ENCODE measurements at regions of chr17 and their contacts with region 1.

Region 1: DNA sequence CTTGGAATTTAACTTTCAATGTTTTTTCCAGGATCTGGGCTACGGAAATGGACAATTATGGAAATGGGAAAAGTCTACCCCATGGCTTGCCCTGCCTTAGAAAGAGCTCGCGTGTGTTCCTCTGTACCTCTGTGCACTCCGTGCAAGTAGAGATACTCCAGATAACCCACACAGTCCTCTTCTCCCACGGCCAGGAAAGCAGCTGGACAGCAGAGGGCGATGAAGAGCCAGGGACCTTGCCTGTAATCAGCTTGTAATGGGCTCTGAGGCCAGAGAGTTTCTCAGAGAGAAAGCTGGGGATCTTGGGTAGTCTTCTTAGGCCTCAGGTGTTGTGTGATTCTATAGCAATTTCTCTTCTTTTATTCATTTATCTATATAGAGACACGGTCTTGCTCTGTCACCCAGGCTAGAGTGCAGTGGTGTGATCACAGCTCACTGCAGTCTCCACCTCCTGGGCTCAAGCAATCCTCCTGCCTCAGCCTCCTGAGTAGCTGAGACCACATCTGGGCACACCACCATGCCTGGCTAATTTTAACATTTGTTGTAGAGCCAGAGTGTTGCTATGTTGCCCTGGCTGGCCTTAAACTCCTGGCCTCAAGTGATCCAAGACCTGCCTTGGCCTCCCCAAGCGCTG is 2.4 kb upstream of the SOCS7 start:
- DNase-seq: peak; percentile 89 to 91
- H3K4me3 ChIP-seq: no peak overlapping the region
- H3K27ac ChIP-seq: no peak overlapping the region
- H3K4me1 ChIP-seq: peaks cover 12 to 17% of the 10 kb centered on the region in 2 donors
- H3K27me3 ChIP-seq: no peaks in the 10 kb centered on the region
- CTCF ChIP-seq: peak; percentile 49 to 95 (median 91)
- POLR2A ChIP-seq: no peak

Region 2: DNA sequence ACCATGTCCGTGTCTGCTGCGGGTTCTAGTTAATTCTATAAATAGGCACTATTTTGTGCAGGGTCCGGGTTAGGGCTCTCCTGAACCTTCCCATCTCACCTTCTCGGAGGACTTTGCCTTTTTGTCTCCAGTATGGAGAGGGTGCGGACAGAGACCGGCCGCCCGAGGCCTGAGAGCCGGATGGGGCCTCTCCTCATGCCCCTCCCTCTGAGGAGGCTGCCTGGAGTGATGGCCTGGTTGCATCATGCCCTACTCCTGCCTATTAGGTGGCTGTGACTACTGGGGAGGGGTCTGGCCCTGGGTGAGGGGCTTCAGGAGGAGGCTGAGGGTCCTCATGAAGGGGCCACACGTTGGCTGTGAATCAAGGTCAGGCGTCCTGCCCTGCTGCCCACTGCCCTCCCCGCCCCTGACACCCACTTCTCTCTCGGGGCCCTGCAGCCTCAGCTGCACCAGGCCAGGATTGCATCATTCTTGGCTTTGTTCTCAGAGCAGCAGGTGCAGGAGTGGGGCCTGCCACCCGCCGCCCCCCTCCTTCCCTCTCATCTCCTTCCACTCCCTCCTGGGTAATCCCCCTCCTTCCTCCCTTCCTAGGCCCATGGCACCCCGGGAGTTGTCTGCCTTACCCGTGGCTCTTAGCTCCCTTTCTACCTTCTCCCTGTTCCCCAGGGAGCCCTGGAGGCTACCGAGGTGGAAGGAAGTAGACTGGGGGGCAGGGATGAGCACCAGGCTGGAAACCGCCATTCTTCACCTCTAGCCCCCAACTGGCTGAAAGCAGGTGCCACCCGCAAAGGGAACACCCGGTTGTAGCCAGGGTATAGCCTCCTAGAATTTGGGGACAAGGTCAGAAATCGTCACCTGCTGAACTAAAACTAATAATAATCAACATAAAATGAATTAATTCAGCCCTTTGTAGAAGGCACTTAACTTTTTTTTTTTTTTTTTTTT is 66.3 kb after region 1 on chr17:
- intact Hi-C with region 1: loop called (anchors 2 kb)
- DNase-seq: peak in 1 of 2 donors; percentile 19
- H3K4me3 ChIP-seq: no peak overlapping the region
- H3K27ac ChIP-seq: no peak overlapping the region
- H3K4me1 ChIP-seq: peaks cover 0 to 18% of the 10 kb centered on the region in 2 donors
- H3K27me3 ChIP-seq: no peaks in the 10 kb centered on the region
- CTCF ChIP-seq: no peak
- POLR2A ChIP-seq: no peak

Region 3: DNA sequence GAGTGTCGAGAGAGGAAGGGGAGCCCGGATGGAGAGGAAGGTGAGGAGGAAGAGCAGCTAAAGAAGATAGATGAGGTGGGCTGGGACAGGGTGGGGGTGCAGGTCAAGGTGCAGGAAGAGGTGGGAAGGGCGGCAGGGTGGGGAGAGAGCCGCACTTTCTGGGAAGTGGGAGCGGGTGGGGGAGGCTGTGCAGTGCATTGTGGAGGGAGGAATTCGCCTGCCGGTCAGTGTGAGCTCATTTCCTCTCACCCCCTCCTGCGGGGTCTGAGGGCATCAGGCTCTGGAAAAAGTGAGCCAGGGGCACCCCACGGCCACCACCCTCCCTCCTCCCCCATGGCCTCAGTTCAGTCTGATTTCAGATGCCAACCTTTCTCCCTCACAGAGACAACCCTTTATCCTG is 76.5 kb after region 1 on chr17:
- intact Hi-C with region 1: no loop called
- DNase-seq: no peak
- H3K4me3 ChIP-seq: no peak overlapping the region
- H3K27ac ChIP-seq: peak overlapping the region in 2 of 3 donors; percentile 30 to 32
- H3K4me1 ChIP-seq: peaks cover 8 to 26% of the 10 kb centered on the region in 2 donors
- H3K27me3 ChIP-seq: peaks cover 4% of the 10 kb centered on the region
- CTCF ChIP-seq: no peak
- POLR2A ChIP-seq: no peak